ENCODE measurements at regions of chr19 and their contacts with region 1.

Region 1: DNA sequence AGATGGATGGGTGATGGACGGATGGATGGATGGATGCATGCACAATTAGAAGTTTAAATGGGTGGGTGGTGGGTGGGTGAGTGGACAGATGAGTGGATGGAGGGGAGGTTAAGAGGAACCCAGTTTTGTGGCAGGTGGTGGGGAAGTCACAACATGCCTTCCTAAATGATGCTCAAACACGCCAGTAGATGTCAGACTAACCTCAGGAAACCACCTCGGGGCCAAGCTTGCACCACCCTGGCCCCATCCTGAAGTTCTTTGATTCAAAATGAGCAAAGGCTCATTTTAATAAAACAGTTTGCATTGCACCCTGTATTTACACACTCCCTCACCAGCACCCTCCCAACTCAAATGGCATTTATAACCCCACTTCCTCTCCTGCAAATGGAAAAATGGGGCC is 91.4 kb upstream of the CACNA1A start:
- DNase-seq: peak; percentile 66
- H3K4me3 Mint-ChIP-seq: no peak overlapping the region
- H3K27ac Mint-ChIP-seq: no peak overlapping the region
- H3K4me1 Mint-ChIP-seq: peaks cover 4% of the 10 kb centered on the region
- H3K27me3 Mint-ChIP-seq: peaks cover 10% of the 10 kb centered on the region

Region 2: DNA sequence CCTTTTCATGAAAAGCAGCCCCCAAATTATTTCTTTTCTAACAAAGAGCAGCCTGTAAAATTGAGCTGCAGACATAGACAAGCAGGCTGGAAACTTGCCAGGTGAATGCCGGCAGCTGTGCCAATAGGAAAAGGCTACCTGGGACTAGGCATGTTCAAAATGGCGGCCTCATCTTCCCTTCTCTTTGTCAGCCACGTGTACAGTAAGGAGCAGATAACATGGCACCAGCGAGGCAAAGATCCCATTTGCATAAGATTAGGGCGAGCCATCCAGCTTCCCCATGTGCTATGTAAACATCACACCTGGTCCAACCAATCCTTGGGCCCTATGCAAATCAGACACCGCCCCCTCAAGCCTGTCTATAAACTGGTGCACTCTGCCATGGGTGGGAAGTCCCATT is 60.2 kb before region 1 on chr19:
- CTCF ChIA-PET with region 1: no interaction called
- POLR2A ChIA-PET with region 1: no interaction called
- intact Hi-C with region 1: no loop called
- DNase-seq: no peak
- H3K4me3 Mint-ChIP-seq: no peak overlapping the region
- H3K27ac Mint-ChIP-seq: no peak overlapping the region
- H3K4me1 Mint-ChIP-seq: no peaks in the 10 kb centered on the region
- H3K27me3 Mint-ChIP-seq: peaks cover 26% of the 10 kb centered on the region

Region 3: DNA sequence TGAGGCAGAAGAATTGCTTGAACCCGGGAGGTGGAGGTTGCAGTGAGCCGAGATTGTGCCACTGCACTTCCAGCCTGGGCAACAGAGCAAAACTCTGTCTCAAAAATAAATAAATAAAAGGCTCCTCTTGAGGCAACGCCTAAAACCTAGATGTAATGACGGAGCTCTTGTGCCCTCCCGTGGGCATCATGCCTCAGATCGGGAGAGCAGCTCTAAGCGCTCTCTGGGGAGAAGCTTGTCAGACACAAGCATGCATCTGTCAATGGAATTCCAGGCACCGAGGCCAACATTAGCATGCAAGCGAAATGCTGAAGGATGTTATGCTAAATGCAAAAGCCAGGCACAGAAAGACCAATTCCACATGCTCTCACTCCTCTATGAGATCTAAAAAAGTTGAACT is 121.1 kb after region 1 on chr19:
- CTCF ChIA-PET with region 1: interaction called, 5 read pairs
- POLR2A ChIA-PET with region 1: no interaction called
- intact Hi-C with region 1: loop called (anchors 1 kb)
- DNase-seq: no peak
- H3K4me3 Mint-ChIP-seq: no peak overlapping the region
- H3K27ac Mint-ChIP-seq: no peak overlapping the region
- H3K4me1 Mint-ChIP-seq: no peaks in the 10 kb centered on the region
- H3K27me3 Mint-ChIP-seq: peaks cover 4% of the 10 kb centered on the region

Region 4: DNA sequence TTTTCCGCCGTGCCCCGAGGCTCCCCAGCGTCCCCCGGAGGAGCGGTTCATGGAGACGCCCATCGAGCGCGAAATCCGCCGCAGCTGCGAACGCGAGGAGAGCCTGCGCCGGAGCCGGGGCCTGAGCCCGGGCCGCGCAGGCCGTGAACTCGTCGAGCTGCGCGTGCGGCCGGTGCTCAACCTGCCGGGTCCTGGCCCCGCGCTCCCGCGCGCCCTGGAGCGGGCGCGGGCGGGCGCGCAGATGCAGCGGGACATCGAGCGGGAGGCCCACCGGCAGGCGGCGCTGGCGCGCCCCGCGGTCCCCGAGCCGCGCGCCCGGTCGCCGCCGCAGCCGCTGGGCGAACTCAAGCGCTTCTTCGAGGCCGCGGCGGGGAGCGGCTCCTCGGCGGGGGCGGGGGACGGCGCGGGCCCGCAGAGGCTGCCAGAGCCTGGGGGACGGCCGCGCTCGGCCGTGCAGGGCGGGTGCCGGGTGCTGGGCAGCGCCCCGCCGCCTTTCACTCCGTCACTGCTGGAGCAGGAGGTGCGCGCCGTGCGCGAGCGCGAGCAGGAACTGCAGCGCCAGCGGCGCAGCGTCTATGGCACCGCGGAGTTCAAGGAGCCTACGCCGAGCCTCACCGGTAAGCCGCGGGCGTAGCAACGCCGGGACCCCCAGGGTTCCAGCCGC is 475.8 kb after region 1 on chr19:
- CTCF ChIA-PET with region 1: no interaction called
- POLR2A ChIA-PET with region 1: no interaction called
- intact Hi-C with region 1: loop called (anchors 10 kb)
- DNase-seq: peak; percentile 80
- H3K4me3 Mint-ChIP-seq: peak overlapping the region; percentile 95
- H3K27ac Mint-ChIP-seq: peak overlapping the region; percentile 84
- H3K4me1 Mint-ChIP-seq: peaks cover 13% of the 10 kb centered on the region
- H3K27me3 Mint-ChIP-seq: no peaks in the 10 kb centered on the region